K562 (cell line): ENCODE measurements at regions of chr11 and their contacts with region 1.

Region 1: DNA sequence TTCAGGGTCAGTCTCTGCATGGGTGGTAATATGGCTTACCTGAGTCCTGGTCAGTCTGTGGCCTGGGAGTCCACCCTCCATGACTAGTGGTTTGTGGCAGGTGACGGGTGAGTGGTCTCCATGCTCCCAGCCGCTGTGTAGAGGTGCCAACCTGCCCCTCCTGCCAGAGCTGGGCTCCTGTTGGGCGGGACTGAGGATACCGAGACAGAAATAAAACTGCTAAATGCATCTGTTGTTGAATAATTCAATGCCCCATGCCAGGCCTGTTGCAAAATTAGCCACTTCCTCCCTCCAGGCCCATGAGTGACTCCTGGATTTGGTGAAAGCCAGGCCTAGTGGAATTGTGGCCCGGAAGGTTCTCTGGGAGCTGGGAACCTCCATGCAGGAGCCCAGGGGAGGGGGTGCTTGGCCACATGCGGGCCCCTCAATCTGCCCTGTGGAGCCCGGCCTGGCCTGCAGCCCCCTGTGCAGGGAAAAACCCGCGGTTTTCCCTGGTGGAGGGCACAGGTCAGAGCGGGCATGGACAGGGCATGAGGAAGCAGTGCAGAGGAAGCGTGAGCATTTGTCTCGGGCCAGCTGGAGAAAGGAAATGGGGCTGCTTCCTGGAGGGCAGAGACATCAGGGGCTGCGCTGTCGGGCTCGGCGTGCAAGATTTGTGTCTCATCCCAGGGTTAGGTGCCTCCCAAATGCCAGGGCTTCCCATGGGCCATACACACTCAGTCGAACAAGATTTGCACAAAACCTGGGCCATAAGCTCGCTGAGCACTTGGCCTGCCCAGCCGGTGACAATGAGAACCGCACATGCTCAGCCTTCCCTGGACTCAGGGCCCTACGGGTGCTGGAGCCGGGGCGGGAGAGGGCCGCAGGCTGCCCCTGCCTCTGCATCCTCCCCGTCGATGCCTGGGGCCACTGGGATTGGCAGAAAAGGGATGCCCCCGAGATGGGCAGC is 66.9 kb downstream of the KCNQ1 start:
- DNase-seq: peak in 3 of 4 experiments; percentile 3 to 5 (median 4)
- ATAC-seq: no peak
- H3K4me3 ChIP-seq: no peak overlapping the region
- H3K27ac ChIP-seq: no peak overlapping the region
- H3K4me1 ChIP-seq: peaks cover 0 to 17% of the 10 kb centered on the region in 2 experiments; a peak in 2 of 5 replicates
- H3K27me3 ChIP-seq: peaks cover 10 to 86% of the 10 kb centered on the region in 2 experiments
- CTCF ChIP-seq: no peak
- EP300 ChIP-seq: no peak
- POLR2A ChIP-seq: no peak
- RAD21 ChIP-seq: no peak

Region 2: GRCh38 chr11:2208691-2209369 is 302.9 kb before region 1 on chr11:
- CTCF ChIA-PET with region 1: no interaction called
- POLR2A ChIA-PET with region 1: no interaction called
- in situ Hi-C with region 1: loop called (anchors 10 kb)
- intact Hi-C with region 1: no loop called
- DNase-seq: no peak
- ATAC-seq: no peak
- H3K4me3 ChIP-seq: no peak overlapping the region
- H3K27ac ChIP-seq: no peak overlapping the region
- H3K4me1 ChIP-seq: peaks cover 0 to 21% of the 10 kb centered on the region in 2 experiments; a peak in 2 of 5 replicates
- H3K27me3 ChIP-seq: peaks cover 17 to 62% of the 10 kb centered on the region in 2 experiments
- CTCF ChIP-seq: no peak
- EP300 ChIP-seq: no peak
- POLR2A ChIP-seq: no peak
- RAD21 ChIP-seq: no peak

Region 3: GRCh38 chr11:2567021-2567671 is 55.5 kb after region 1 on chr11:
- CTCF ChIA-PET with region 1: no interaction called
- POLR2A ChIA-PET with region 1: no interaction called
- in situ Hi-C with region 1: no loop called
- intact Hi-C with region 1: no loop called
- DNase-seq: no peak
- ATAC-seq: no peak
- H3K4me3 ChIP-seq: no peak overlapping the region
- H3K27ac ChIP-seq: no peak overlapping the region
- H3K4me1 ChIP-seq: peaks cover 0 to 32% of the 10 kb centered on the region in 2 experiments; a peak in 4 of 5 replicates
- H3K27me3 ChIP-seq: peaks cover 12 to 30% of the 10 kb centered on the region in 2 experiments; a peak in 4 of 5 replicates
- CTCF ChIP-seq: no peak
- EP300 ChIP-seq: no peak
- POLR2A ChIP-seq: no peak
- RAD21 ChIP-seq: no peak